ENCODE measurements at regions of chr16 and their contacts with region 1.

Region 1: DNA sequence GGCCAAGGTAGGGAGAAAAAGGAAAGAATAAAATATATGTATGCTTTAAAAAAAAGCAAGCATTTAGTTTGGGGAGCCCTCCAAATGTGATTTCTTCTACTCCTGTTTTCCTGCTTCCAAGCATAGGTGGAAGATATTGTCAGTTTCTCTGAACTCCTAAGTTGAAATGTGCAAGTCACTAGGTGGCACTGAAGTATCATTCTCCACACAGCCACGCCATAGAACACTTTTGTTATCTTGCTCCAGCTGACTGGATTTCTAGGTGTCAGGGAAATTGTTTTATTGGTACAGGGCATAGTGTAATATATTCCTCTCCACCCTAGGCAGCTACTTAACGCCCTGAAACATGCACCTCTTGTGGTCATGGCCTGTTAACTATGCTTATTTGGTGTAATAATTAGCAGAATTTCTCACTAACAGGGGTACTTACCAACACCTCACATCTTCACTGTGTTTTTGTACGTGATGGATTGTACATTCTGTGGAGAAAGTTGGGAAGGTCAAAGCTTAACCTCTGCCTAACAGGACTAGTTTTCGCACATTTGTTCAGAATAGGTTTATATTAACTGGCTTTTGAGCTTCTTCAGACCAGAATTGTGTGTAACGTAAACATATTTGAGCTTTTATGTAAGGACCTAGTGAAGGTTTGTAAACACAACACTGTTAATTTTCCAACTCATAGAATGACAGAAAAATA is 69.3 kb downstream of the FTO start:
- DNase-seq: peak; percentile 81
- H3K4me3 Mint-ChIP-seq: no peak overlapping the region
- H3K27ac Mint-ChIP-seq: no peak overlapping the region
- H3K4me1 Mint-ChIP-seq: peaks cover 43% of the 10 kb centered on the region
- H3K27me3 Mint-ChIP-seq: no peaks in the 10 kb centered on the region
- CTCF ChIP-seq: peak; percentile 60

Region 2: GRCh38 chr16:53549970-53550690 is 223.2 kb before region 1 on chr16:
- CTCF ChIA-PET with region 1: interaction called, 9 read pairs
- POLR2A ChIA-PET with region 1: no interaction called
- intact Hi-C with region 1: loop called (anchors 1 kb)
- DNase-seq: peak; percentile 81
- H3K4me3 Mint-ChIP-seq: no peak overlapping the region
- H3K27ac Mint-ChIP-seq: no peak overlapping the region
- H3K4me1 Mint-ChIP-seq: peaks cover 6% of the 10 kb centered on the region
- H3K27me3 Mint-ChIP-seq: no peaks in the 10 kb centered on the region
- CTCF ChIP-seq: peak; percentile 69

Region 3: GRCh38 chr16:53755536-53755910 is 17.8 kb before region 1 on chr16:
- CTCF ChIA-PET with region 1: interaction called, 11 read pairs
- POLR2A ChIA-PET with region 1: interaction called, 59 read pairs
- intact Hi-C with region 1: no loop called
- DNase-seq: peak; percentile 96
- H3K4me3 Mint-ChIP-seq: peak overlapping the region; percentile 16
- H3K27ac Mint-ChIP-seq: peak overlapping the region; percentile 64
- H3K4me1 Mint-ChIP-seq: peaks cover 26% of the 10 kb centered on the region
- H3K27me3 Mint-ChIP-seq: no peaks in the 10 kb centered on the region
- CTCF ChIP-seq: no peak

Region 4: DNA sequence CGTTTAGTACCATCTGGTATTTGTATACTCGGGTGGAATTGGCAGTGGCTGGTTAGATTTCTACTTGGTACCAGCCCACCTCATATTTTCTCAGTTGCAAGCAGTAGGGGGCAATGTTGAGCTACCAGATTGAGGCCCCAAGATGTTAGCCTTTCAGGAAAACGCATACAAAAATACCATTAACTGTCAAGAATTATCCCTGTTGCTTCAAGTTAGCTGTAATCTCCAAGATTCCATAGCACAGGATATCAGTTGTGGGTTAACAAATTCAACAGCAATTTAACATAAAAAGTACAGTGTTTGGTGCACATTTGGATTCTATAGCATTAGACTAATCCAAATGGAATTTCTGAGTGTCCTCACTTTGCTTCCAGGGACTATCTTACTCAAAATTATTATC is 118.9 kb after region 1 on chr16:
- CTCF ChIA-PET with region 1: interaction called, 21 read pairs
- POLR2A ChIA-PET with region 1: interaction called, 13 read pairs
- intact Hi-C with region 1: loop called (anchors 2 kb)
- DNase-seq: peak; percentile 77
- H3K4me3 Mint-ChIP-seq: no peak overlapping the region
- H3K27ac Mint-ChIP-seq: no peak overlapping the region
- H3K4me1 Mint-ChIP-seq: peaks cover 16% of the 10 kb centered on the region
- H3K27me3 Mint-ChIP-seq: no peaks in the 10 kb centered on the region
- CTCF ChIP-seq: peak; percentile 67

Region 5: DNA sequence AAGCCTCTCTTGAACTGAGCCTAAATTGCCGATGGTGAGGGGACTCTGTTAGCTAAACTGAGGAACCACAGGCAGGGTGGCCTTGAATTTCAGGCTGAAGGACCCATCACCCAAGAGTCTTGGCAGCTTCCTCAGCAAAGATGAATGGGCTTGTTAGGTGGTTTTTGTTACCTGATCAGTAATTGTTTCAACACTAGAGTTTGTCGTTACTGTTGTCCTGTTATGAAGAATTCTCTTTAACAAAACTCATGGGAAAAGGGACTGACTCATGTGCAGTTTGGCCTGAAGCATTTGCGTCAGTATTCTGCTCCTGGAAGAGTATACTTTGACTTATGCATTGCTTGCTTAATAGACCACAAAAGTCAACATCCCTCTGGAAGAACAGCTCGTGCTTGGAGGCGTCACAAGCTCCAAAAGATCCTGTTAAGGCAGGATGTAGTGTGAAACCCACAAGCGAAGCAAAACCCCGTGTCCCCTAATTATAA is 307.3 kb after region 1 on chr16:
- CTCF ChIA-PET with region 1: interaction called, 8 read pairs
- POLR2A ChIA-PET with region 1: interaction called, 5 read pairs
- intact Hi-C with region 1: loop called (anchors 1 kb)
- DNase-seq: peak; percentile 99
- H3K4me3 Mint-ChIP-seq: peak overlapping the region; percentile 54
- H3K27ac Mint-ChIP-seq: peak overlapping the region; percentile 99
- H3K4me1 Mint-ChIP-seq: peaks cover 41% of the 10 kb centered on the region
- H3K27me3 Mint-ChIP-seq: no peaks in the 10 kb centered on the region
- CTCF ChIP-seq: no peak

Region 6: GRCh38 chr16:54296543-54296942 is 523.2 kb after region 1 on chr16:
- CTCF ChIA-PET with region 1: no interaction called
- POLR2A ChIA-PET with region 1: no interaction called
- intact Hi-C with region 1: no loop called
- DNase-seq: no peak
- H3K4me3 Mint-ChIP-seq: no peak overlapping the region
- H3K27ac Mint-ChIP-seq: no peak overlapping the region
- H3K4me1 Mint-ChIP-seq: no peaks in the 10 kb centered on the region
- H3K27me3 Mint-ChIP-seq: no peaks in the 10 kb centered on the region
- CTCF ChIP-seq: no peak

Region 7: GRCh38 chr16:54447591-54448440 is 674.5 kb after region 1 on chr16:
- CTCF ChIA-PET with region 1: no interaction called
- POLR2A ChIA-PET with region 1: interaction called, 6 read pairs
- intact Hi-C with region 1: loop called (anchors 10 kb)
- DNase-seq: peak; percentile 93
- H3K4me3 Mint-ChIP-seq: no peak overlapping the region
- H3K27ac Mint-ChIP-seq: no peak overlapping the region
- H3K4me1 Mint-ChIP-seq: peaks cover 32% of the 10 kb centered on the region
- H3K27me3 Mint-ChIP-seq: no peaks in the 10 kb centered on the region
- CTCF ChIP-seq: no peak

Region 8: DNA sequence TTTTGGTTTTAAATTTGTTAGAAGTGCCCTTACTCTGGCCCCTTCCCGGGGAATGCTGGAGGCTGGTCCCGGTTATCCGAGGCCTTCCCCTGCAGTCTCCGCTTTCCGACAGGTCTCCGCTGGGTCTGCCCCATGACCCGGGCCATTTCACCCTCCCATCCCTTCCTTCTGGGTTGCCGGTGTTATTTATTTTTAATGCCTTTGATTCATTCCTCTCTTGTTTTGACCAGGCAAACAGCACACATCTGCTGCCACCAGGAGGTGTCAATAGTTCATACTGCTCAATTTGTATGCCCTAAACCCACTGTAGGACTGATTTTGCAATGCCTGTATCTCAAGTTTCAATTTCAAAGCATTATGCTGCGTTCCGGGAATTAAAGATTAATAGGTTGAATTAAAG is 1044.1 kb after region 1 on chr16:
- CTCF ChIA-PET with region 1: no interaction called
- POLR2A ChIA-PET with region 1: no interaction called
- intact Hi-C with region 1: loop called (anchors 2 kb)
- DNase-seq: peak; percentile 69
- H3K4me3 Mint-ChIP-seq: no peak overlapping the region
- H3K27ac Mint-ChIP-seq: no peak overlapping the region
- H3K4me1 Mint-ChIP-seq: no peaks in the 10 kb centered on the region
- H3K27me3 Mint-ChIP-seq: no peaks in the 10 kb centered on the region
- CTCF ChIP-seq: peak; percentile 42